Activated naive CD4-positive, alpha-beta T cell treated with anti-CD3 and anti-CD28 coated beads for 36 hours (primary cell): ENCODE measurements at regions of chr4 and their contacts with region 1.

Region 1: GRCh38 chr4:168540086-168540865 is 43.4 kb downstream of the PALLD start:
- DNase-seq: peak; percentile 31
- H3K4me3 Mint-ChIP-seq: no peak overlapping the region
- H3K27ac Mint-ChIP-seq: no peak overlapping the region
- H3K4me1 Mint-ChIP-seq: peaks cover 9% of the 10 kb centered on the region
- H3K27me3 Mint-ChIP-seq: peaks cover 7% of the 10 kb centered on the region

Region 2: GRCh38 chr4:168557658-168558057 is 17.4 kb after region 1 on chr4:
- CTCF ChIA-PET with region 1: interaction called, 5 read pairs
- intact Hi-C with region 1: loop called (anchors 2 kb)
- DNase-seq: no peak
- H3K4me3 Mint-ChIP-seq: no peak overlapping the region
- H3K27ac Mint-ChIP-seq: no peak overlapping the region
- H3K4me1 Mint-ChIP-seq: peaks cover 3% of the 10 kb centered on the region
- H3K27me3 Mint-ChIP-seq: peaks cover 11% of the 10 kb centered on the region

Region 3: DNA sequence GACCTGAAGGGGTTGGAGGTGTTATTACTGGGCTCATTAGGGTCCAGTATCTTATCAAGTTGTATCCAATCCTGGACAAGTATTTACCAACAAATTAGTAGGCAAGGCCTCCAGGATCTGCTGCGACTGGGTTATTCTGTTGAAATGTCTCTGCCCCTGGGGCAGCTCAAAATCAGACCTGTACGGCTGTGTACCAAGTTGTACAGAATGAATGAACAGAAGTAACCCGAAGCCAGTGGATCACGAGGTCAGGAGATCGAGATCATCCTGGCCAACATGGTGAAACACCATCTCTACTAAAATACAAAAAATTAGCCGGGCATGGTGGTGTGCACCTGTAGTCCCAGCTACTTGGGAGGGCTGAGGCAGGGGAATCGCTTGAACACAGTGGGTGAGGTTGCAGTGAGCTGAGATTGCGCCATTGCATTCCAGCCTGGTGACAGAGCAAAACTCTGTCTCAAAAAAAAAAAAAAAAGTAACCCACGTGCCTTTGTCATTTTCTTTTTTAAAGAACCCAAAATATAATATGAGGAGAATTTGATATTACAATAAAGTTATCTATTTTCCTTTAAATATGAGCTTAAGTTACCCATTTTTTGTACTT is 342.5 kb after region 1 on chr4:
- CTCF ChIA-PET with region 1: no interaction called
- intact Hi-C with region 1: no loop called
- DNase-seq: no peak
- H3K4me3 Mint-ChIP-seq: no peak overlapping the region
- H3K27ac Mint-ChIP-seq: no peak overlapping the region
- H3K4me1 Mint-ChIP-seq: peaks cover 6% of the 10 kb centered on the region
- H3K27me3 Mint-ChIP-seq: peaks cover 33% of the 10 kb centered on the region